ENCODE measurements at regions of chr14 and their contacts with region 1.

Region 1: DNA sequence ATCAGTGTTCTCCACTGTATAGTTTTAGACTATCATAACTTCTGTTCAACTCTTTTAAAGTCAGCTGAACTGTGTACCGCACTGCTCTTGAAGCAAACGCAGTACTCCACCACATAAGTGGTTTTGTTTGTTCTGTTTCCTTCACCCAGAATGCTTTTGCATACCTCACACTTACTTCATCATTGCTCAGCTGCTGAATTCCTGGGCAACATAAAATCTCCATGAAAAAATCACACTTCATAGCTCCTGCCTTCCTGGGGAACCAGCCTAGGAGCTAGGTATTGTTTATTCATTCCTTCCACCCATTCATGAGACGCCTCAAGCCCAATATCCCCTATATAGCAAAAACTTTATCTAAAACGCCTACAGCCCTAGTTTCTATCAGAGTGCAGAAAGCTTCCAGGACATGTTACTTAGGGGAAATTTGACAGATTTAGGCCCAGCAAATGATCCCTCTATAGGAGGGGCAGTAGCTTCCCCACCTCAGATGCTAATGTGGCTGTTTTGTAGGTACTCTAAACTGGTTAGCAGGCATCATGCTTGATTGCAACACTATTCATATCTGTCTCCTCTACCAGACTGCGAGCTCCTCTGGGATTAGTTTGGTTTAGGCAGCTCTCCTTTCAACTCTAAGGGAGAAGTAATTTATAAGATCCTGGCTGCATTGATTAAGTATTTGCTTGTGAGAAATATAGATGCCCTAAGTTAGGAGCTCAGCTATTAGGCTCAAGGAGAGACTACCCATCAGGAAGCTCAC is 44.5 kb downstream of the LRRC9 start:
- DNase-seq: no peak

Region 2: DNA sequence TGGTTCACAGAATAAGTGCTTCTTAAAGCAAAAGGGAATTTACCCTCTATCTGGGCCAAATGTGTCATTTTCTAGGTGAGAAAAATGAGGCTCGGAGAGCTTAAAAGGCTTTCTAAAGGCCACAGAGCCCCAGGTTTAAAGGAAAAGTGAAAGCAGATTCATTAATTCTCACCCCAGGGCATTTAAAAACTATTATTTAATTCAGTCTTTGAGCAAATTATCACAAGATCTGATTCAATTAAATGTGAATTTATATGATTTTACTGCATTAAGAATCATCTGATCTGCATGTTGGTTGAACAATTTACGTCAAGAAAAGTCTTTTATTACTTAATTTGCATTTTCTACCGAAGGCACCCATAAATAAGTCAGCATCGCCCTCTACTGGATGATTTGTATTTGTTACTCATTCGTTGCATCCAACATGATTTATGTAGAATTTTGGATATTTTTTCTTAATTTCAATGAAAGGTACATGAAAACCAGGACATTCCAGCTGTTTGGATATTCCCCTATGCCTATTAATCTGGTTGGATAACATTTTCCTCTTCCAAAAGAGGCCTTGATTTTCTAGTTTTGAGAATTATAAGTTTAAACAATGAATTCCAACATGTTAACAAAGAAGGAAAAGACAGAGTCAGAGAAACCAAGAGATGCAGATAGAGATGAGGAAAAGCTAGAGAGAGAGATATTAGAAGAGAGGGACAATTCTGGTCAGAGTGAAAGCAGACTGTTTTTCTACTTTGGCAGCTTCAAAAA is 219.9 kb after region 1 on chr14:
- in situ Hi-C with region 1: loop called (anchors 25 kb)
- DNase-seq: peak; percentile 33